Activated T-helper 2 cell treated with anti-CD3 and anti-CD28 coated beads, Interferon-gamma antibody, Interleukin-2, Interleukin-4, amounts not matched to agents 10 μg/mL and 5 μg/mL and 100 μg/mL, durations not matched to agents 14 hours and 24 hours and 36 hours (primary cell): ENCODE measurements at regions of chr6 and their contacts with region 1.

Region 1: DNA sequence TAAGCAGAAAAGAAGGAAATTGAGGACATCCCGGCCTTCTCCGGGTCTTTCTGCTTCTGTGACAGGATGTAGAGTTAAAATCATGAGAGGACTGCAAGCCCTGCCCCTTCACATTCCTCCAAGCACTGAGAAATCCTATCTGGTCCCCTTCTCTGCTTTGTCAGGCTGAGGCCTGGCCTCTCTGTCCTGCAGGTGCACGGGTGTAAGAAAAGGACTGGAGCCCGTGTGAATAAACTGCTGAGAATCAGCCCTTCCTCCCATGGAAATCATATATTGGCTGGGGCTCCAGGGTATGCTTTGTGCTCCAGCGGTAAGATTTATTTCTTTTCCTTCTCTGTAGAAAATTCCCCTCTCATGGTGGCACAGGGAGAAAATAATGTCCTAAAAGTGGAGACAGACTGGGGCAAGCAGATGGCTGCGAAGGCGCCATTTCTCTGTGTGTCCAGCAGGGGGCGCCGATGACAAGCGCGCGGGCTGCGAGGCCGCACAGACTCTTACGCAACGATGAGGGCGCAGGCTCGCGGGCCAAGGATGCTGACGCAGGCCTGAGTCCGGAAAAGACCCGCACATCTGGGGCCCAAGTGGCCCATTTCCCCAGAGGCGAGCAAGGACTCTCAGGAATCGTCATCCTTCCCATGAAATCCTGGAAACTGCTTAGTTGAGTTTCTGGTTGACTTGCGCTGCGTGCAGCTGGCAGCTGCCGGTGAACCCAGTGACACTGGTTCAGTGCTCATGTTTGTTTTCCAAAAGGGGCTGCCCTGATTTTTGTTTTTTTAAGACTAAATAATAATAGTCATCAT is 258.6 kb downstream of the ADGB start:
- DNase-seq: peak; percentile 63
- H3K4me3 Mint-ChIP-seq: no peak overlapping the region
- H3K27ac Mint-ChIP-seq: peak overlapping the region; percentile 72
- H3K4me1 Mint-ChIP-seq: peaks cover 34% of the 10 kb centered on the region
- H3K27me3 Mint-ChIP-seq: no peaks in the 10 kb centered on the region

Region 2: GRCh38 chr6:145814501-145815308 is 1042.7 kb before region 1 on chr6 and contains the start of gene FBXO30:
- intact Hi-C with region 1: no loop called
- DNase-seq: peak; percentile 82
- H3K4me3 Mint-ChIP-seq: peak within 1 kb of the TSS; percentile 87
- H3K27ac Mint-ChIP-seq: peak within 1 kb of the TSS; percentile 89
- H3K4me1 Mint-ChIP-seq: peaks cover 39% of the 10 kb centered on the region
- H3K27me3 Mint-ChIP-seq: no peaks in the 10 kb centered on the region
- total RNA-seq, gene FBXO30: 6.4 and 6.8 TPM in 2 replicates

Region 3: DNA sequence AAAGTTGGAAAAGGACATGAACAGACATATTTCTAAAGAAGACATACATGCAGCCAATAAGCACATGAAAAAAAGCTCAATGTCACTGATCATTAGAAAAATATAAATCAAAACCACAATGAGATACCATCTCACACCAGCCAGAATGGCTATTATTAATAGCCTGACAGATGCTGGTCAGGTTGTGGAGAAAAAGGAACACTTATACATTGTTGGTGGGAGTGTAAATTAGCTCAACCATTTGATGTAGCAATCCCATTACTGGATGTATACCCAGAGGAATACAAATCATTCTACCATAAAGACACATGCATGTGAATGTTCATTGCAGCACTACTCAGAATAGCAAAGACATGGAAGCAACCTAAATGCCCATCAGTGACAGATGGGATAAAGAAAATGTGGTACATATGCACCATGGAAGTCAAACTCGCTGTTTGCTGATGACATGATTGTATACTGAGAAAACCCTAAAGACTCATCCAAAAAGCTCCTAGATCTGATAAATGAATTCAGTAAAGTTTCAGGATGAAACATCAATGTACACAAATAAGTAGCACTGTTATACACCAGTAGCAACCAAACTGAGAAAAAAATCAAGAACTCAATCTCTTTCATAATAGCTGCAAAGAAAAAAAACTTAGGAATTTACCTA is 61.8 kb before region 1 on chr6:
- intact Hi-C with region 1: loop called (anchors 2 kb)
- DNase-seq: no peak
- H3K4me3 Mint-ChIP-seq: no peak overlapping the region
- H3K27ac Mint-ChIP-seq: peak overlapping the region; percentile 10
- H3K4me1 Mint-ChIP-seq: peaks cover 14% of the 10 kb centered on the region
- H3K27me3 Mint-ChIP-seq: no peaks in the 10 kb centered on the region

Region 4: GRCh38 chr6:147063469-147064031 is 206.2 kb after region 1 on chr6:
- intact Hi-C with region 1: loop called (anchors 10 kb)
- DNase-seq: no peak
- H3K4me3 Mint-ChIP-seq: no peak overlapping the region
- H3K27ac Mint-ChIP-seq: no peak overlapping the region
- H3K4me1 Mint-ChIP-seq: peaks cover 5% of the 10 kb centered on the region
- H3K27me3 Mint-ChIP-seq: no peaks in the 10 kb centered on the region

Region 5: DNA sequence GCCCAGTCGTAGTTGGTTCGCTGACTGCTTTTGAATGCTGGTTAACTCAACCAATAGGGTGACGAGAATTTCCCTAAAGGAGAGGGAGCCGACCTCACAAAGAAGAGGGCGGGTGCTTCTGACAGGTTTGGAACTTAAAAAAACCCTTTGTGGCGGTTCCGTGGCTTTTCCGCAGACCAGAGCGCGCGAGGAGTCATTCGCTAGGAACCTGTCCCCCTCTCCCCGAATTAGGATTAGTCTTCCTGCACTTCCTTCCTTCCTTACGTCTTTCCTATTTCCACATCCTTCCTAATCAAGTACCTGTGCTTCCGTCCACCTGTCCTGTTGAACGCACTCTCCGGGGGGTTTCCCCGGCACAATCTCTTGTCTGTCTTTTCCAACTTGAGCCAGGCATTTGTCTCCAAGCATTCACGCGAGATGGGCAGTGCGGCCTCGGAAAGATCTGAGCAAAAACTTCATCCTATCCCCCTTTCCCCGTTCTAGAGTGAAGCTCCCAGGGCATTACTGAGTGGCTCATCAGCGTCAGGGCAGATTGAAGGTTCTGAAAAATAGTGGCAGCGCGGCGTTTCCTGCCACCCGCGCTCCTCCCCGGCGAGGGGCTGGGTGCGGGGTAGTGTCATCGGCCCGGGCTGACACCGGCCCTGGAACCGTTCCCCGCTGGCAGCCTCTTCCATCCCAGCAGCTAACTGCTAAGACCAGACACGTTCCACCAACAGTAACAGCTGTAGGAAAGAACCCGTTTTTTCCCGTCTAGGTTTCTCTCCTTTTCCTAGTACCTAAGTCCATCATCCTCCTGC is 345.3 kb after region 1 on chr6:
- intact Hi-C with region 1: loop called (anchors 2 kb)
- DNase-seq: peak; percentile 79
- H3K4me3 Mint-ChIP-seq: peak overlapping the region; percentile 93
- H3K27ac Mint-ChIP-seq: peak overlapping the region; percentile 99
- H3K4me1 Mint-ChIP-seq: peaks cover 29% of the 10 kb centered on the region
- H3K27me3 Mint-ChIP-seq: no peaks in the 10 kb centered on the region

Region 6: DNA sequence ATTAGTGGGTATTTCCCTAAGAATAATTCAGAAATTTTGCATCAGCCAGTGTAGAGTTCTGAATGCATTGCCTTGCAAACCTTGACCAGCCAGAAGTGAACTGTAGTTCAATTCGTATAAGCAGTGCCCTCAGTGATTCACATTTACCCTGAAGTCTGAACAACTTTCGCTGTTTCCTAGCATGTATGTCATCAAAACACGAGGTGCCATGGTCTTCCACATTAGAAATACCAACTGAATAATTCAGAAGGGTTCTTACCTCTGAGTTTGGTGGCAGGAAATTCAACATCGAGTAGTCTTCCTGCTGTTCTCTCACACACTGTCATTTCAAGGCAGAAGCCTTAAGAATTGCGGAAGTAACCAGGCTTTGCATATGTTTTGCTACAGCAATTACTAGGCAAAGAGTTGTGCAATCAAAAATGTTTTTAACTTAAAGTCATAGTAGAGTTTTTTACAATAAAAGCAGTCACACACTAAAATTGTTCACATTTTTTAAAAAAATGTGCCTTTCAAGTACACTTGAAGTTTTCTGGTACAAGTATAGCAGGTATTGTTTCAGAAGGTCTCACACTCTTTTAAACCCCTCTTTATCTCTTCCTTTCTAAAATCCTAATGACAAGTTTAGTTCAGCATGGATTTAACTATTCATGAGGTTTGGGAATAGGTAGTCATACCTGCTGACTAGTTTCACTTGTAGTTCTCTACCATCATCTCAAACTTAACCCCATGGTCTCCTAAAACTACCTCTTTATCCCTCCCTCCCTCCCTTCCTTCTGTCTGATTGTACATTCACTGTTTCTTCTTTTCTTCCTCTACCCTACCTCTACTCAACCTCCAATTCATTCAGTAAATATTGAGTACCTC is 465.2 kb after region 1 on chr6:
- intact Hi-C with region 1: loop called (anchors 2 kb)
- DNase-seq: peak; percentile 11
- H3K4me3 Mint-ChIP-seq: peak overlapping the region; percentile 55
- H3K27ac Mint-ChIP-seq: peak overlapping the region; percentile 79
- H3K4me1 Mint-ChIP-seq: peaks cover 18% of the 10 kb centered on the region
- H3K27me3 Mint-ChIP-seq: no peaks in the 10 kb centered on the region

Region 7: DNA sequence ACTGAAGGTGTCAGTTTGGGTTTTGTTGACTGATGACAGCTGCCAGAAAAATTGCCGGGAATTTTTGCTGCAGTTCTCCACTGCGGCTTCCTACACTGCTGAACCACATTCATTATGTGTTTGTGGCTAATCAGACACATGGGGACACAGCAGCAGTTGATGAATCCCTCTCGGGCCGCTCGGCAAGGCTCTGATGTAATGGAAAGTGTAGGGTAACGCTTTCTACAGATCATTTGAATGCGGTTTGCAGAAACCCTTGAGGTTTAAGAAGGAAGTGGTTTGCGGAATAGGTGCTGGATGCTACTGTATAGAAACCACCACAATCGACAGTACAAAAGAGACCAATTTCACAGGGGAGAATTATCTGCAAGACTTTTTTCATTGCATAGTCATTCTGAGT is 1346.6 kb after region 1 on chr6:
- intact Hi-C with region 1: loop called (anchors 2 kb)
- DNase-seq: peak; percentile 74
- H3K4me3 Mint-ChIP-seq: no peak overlapping the region
- H3K27ac Mint-ChIP-seq: peak overlapping the region; percentile 58
- H3K4me1 Mint-ChIP-seq: peaks cover 22% of the 10 kb centered on the region
- H3K27me3 Mint-ChIP-seq: peaks cover 74% of the 10 kb centered on the region